ENCODE measurements at regions of chr19 and their contacts with region 1.

Region 1: GRCh38 chr19:14405758-14406644 is 13.1 kb downstream of the DDX39A start:
- DNase-seq: no peak
- H3K4me3 ChIP-seq: no peak overlapping the region
- CTCF ChIP-seq: peak; percentile 85

Region 2: GRCh38 chr19:14147797-14148605 is 258.0 kb before region 1 on chr19:
- CTCF ChIA-PET with region 1: interaction called, 11 read pairs
- POLR2A ChIA-PET with region 1: no interaction called
- DNase-seq: no peak
- H3K4me3 ChIP-seq: no peak overlapping the region
- CTCF ChIP-seq: peak; percentile 91

Region 3: DNA sequence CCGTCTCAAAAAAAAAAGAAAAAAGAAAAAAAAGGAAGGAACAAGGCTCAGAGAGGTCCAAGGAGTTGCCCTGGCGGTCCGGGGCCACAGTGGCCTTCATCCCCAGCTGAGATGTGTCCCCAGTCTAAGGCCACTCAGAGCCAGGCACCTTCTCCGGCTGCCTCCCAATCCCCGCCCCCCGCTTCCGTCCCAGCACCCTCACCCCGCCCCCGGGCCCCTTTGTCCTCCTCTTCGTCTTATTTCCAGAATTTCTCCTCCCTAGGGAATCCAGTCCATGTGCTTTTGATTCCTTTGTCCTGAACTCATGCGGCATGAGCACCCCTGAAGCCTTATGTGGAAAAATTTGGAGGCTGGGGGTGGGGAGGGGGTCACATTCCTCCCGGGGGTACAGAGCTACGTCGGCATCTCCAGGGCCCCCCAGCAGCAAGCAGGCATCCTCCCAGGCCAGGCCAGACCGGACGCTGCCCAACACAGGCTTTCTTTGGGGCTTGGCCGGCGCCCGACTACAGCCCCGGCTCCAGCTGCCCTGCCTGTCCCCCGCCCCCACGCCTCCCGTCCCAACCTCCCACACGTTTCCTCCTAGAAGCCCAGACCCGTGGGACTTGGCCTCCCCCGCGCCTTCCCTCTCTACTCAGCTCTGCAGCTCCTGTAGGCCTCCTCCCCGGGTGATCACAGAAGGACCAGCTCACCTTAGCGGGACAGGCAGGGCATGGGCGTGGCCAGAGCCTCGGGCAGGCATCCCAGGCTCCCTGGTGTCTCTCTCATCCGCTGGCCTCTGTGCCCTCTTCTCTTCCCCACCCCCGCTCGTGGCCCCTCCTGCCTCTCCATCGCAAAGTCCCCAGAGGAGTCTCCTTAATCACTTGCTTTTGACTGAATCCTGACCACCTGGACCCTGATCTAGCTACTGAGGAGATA is 42.6 kb before region 1 on chr19:
- CTCF ChIA-PET with region 1: interaction called, 13 read pairs
- POLR2A ChIA-PET with region 1: no interaction called
- DNase-seq: peak; percentile 41
- H3K4me3 ChIP-seq: peak overlapping the region; percentile 40
- CTCF ChIP-seq: no peak

Region 4: GRCh38 chr19:14377883-14378328 is 28.1 kb before region 1 on chr19:
- CTCF ChIA-PET with region 1: interaction called, 11 read pairs
- POLR2A ChIA-PET with region 1: interaction called, 5 read pairs
- DNase-seq: no peak
- H3K4me3 ChIP-seq: no peak overlapping the region
- CTCF ChIP-seq: no peak

Region 5: DNA sequence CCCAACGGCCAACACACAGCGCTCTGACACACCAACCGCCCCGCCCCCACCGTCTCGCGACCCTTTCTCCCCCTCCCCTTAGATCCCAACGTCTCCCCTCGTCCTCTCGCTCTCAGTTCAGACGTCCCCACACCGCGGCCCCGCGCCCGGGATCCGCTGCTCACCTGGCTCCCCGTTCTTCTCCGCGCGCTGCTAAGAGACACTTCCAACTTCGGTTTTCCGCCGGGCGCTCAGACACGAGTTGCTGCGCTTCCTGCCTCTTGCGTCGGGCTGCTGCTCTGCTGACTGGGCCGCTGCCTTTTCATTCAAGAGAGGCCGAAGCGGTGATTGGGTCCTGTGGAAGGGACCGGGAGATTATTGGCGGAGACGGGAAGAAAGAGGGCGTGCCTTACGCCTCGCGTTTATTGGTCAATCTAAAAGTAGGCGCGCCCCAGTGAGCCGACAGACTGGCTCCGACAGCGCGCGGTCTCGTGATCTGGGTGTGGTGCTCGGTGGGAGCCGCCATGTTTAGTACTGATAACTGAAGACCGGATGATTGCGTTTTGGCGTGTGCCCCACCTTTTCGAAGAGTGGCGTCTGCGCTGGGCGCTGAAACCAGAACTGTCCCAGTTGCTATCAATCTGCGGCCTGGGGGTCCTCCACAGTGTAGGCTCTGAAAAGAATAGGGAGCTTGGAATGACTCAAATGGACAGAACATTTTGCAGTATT is 13.3 kb after region 1 on chr19 and contains the start of gene DDX39A:
- CTCF ChIA-PET with region 1: interaction called, 18 read pairs
- POLR2A ChIA-PET with region 1: interaction called, 5 read pairs
- DNase-seq: peak; percentile 95
- H3K4me3 ChIP-seq: peak within 1 kb of the TSS; percentile 87
- CTCF ChIP-seq: no peak